HepG2 (cell line): ENCODE measurements at regions of chr7 and their contacts with region 1.

Region 1: GRCh38 chr7:2314209-2314955 is at the start of gene SNX8:
- DNase-seq: peak; percentile 77
- ATAC-seq: peak; percentile 90
- H3K4me3 ChIP-seq: peak within 1 kb of the TSS; percentile 86 to 96 (median 89)
- H3K27ac ChIP-seq: peak within 1 kb of the TSS; percentile 75
- H3K4me1 ChIP-seq: peaks cover 41% of the 10 kb centered on the region
- H3K27me3 ChIP-seq: no peaks in the 10 kb centered on the region; a peak in 1 of 5 replicates
- CTCF ChIP-seq: peak; percentile 50
- EP300 ChIP-seq: no peak
- POLR2A ChIP-seq: peak; percentile 72 to 84
- RAD21 ChIP-seq: 0 out of 2 replicates have a peak, but pooled peaks have one; percentile 8
- total RNA-seq, gene SNX8: 20.6 and 33.7 TPM in 2 replicates

Region 2: DNA sequence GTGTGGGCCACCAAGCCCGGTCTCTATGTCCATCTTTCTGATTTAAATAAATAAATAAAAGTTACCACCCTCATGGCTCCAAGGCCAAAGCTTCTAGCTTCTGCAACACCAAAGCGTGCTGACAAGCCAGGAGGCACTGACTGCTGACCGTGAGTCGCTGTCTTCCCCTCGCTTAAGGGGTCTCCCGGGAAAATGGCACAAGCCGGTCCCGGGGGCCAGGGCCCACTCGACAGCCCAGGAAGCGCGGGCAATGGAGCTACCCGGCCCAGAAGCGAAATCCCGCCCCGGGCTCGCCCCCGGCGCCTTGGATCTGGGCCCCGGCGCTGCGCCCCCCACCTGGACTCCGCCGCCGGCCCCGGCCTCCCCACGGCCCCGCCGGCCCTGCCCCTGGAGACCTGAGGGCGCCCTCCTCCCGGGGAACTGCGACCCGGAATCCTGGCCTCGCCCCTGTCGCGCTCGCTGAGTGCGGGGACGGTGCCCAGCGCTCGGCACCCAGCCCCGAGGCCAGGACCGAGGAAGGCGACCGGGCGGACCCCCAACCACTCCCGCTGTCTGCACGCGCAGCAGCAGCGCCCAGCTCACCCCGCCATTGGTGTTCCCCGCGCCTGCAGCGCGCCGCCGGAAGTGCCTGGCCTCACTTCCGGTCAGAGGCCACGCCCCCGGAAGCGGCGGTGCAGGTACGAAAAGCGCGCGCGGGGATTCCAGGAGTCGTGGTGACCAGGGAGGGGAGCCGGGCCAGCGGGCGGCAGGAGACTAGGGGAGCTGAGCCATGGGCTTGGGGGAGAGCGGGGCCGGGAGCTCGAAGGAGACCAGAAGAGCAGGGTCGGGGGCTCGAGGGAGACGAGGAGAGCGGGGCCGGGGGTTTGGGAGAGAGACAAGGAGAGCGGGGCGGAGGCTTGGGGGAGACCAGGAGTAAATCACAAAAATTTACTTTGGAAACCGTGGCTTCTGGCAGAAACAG is 72.5 kb before region 1 on chr7 and contains the starts of genes MRM2 and NUDT1:
- CTCF ChIA-PET with region 1: no interaction called
- POLR2A ChIA-PET with region 1: no interaction called
- in situ Hi-C with region 1: no loop called
- intact Hi-C with region 1: loop called (anchors 10 kb)
- DNase-seq: peak; percentile 74
- ATAC-seq: peak; percentile 90
- H3K4me3 ChIP-seq: peak within 1 kb of the TSS; percentile 91 to 98 (median 98)
- H3K27ac ChIP-seq: peak within 1 kb of the TSS; percentile 72
- H3K4me1 ChIP-seq: peaks cover 45% of the 10 kb centered on the region
- H3K27me3 ChIP-seq: no peaks in the 10 kb centered on the region; a peak in 1 of 5 replicates
- CTCF ChIP-seq: peak; percentile 44
- EP300 ChIP-seq: no peak; a peak in 1 of 4 replicates
- POLR2A ChIP-seq: peak; percentile 79 to 95
- RAD21 ChIP-seq: peak; percentile 65; the same call in 1 of the 2 replicates
- total RNA-seq, gene MRM2: 34.2 and 42.6 TPM in 2 replicates
- total RNA-seq, gene NUDT1: 26.8 and 32.7 TPM in 2 replicates

Region 3: GRCh38 chr7:2258661-2259365 is 55.6 kb before region 1 on chr7:
- CTCF ChIA-PET with region 1: no interaction called
- POLR2A ChIA-PET with region 1: no interaction called
- in situ Hi-C with region 1: loop called (anchors 10 kb)
- intact Hi-C with region 1: no loop called
- DNase-seq: no peak
- ATAC-seq: no peak
- H3K4me3 ChIP-seq: no peak overlapping the region
- H3K27ac ChIP-seq: no peak overlapping the region
- H3K4me1 ChIP-seq: no peaks in the 10 kb centered on the region
- H3K27me3 ChIP-seq: no peaks in the 10 kb centered on the region
- CTCF ChIP-seq: no peak
- EP300 ChIP-seq: no peak
- POLR2A ChIP-seq: no peak
- RAD21 ChIP-seq: no peak

Region 4: GRCh38 chr7:2266908-2267307 is 47.5 kb before region 1 on chr7:
- CTCF ChIA-PET with region 1: no interaction called
- POLR2A ChIA-PET with region 1: no interaction called
- in situ Hi-C with region 1: no loop called
- intact Hi-C with region 1: loop called (anchors 1 kb)
- DNase-seq: no peak
- ATAC-seq: peak; percentile 18; the same call in 2 of the 3 replicates
- H3K4me3 ChIP-seq: no peak overlapping the region
- H3K27ac ChIP-seq: no peak overlapping the region
- H3K4me1 ChIP-seq: peaks cover 37% of the 10 kb centered on the region
- H3K27me3 ChIP-seq: no peaks in the 10 kb centered on the region
- CTCF ChIP-seq: no peak
- EP300 ChIP-seq: no peak
- POLR2A ChIP-seq: no peak
- RAD21 ChIP-seq: no peak

Region 5: DNA sequence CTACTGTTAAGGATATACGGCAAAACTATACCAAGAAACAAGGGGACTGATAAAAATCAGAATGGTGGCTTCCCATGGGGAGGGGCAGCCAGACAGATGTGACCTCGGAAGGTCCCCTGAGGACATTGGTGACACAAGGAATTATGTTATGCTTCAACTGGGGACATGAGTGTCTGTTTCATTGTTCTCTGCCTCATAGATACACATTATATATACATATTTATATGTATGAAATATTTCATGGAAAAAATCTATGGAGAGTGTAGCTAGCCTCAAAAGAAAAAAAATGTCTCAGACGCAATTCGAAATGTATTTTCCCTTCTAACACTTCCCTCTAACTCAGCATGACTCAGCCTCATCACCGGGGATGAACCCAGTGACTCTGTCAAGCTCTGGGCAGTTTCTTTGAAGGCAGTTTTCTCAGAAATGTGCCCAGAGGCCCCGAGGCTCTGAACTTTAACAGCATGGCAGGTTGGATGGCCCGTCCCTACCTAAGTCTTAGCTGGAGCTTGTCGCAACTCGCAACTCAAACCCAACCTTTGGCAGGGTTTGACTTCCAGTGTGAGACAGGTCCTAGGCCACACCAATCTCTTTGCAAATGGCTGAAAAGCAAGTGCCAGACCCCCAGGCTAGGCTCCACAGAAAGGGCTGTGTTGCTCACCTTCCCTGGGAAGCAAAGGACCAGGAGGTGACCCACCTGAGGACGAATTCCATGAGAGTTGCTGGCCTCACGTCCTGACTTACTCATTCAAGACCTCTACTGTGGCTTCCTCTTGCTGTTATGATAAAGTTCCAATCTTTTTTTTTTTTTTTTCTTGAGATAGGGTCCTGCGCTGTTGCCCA is 642.4 kb after region 1 on chr7:
- CTCF ChIA-PET with region 1: no interaction called
- POLR2A ChIA-PET with region 1: no interaction called
- in situ Hi-C with region 1: no loop called
- intact Hi-C with region 1: no loop called
- DNase-seq: no peak
- ATAC-seq: no peak
- H3K4me3 ChIP-seq: no peak overlapping the region
- H3K27ac ChIP-seq: no peak overlapping the region
- H3K4me1 ChIP-seq: no peaks in the 10 kb centered on the region
- H3K27me3 ChIP-seq: no peaks in the 10 kb centered on the region; a peak in 1 of 5 replicates
- CTCF ChIP-seq: no peak
- EP300 ChIP-seq: no peak
- POLR2A ChIP-seq: no peak
- RAD21 ChIP-seq: no peak